ENCODE measurements at regions of chr1 and their contacts with region 1.

Region 1: DNA sequence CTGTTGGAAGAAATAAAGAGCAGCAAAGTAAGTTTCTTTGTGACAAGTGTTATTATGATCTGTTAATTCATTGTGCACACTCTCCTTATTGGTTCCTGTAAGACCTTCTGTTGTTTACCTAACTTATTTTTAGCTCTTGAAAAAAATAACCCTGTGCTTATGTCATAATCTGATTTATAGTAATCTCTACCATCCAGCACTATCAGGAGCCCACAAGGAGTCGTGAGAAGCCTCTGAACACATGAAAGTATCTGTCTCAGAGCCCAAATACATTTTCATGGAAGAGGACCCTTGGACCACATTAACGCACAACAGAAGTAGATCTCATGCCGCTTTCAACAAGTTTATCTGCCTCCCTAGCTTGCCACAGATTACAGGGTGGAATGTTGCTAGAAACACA is 45.8 kb downstream of the CENPF start:
- DNase-seq: no peak
- H3K4me3 ChIP-seq: no peak overlapping the region
- H3K27me3 ChIP-seq: no peaks in the 10 kb centered on the region
- CTCF ChIP-seq: no peak

Region 2: DNA sequence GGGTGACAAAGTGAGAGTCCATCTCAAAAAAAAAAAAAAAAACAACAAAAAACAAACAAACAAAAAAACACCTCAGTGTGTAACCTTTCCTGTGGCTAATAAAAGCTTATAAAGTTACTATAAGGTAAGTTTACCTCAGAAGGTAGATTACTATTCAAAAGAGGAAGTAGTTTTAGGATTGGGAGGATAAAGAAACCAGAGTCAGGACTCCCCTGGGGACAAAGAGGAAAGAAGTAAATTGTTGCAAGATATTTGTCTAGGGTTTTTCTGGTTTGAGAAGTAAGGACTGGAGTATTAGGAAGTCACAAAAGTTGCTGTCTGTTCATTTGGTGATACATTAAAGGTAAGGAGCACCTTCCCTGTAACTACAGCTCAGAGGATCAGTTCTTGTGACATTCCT is 69.6 kb before region 1 on chr1:
- CTCF ChIA-PET with region 1: no interaction called
- POLR2A ChIA-PET with region 1: no interaction called
- DNase-seq: no peak
- H3K4me3 ChIP-seq: no peak overlapping the region
- H3K27me3 ChIP-seq: no peaks in the 10 kb centered on the region
- CTCF ChIP-seq: no peak

Region 3: DNA sequence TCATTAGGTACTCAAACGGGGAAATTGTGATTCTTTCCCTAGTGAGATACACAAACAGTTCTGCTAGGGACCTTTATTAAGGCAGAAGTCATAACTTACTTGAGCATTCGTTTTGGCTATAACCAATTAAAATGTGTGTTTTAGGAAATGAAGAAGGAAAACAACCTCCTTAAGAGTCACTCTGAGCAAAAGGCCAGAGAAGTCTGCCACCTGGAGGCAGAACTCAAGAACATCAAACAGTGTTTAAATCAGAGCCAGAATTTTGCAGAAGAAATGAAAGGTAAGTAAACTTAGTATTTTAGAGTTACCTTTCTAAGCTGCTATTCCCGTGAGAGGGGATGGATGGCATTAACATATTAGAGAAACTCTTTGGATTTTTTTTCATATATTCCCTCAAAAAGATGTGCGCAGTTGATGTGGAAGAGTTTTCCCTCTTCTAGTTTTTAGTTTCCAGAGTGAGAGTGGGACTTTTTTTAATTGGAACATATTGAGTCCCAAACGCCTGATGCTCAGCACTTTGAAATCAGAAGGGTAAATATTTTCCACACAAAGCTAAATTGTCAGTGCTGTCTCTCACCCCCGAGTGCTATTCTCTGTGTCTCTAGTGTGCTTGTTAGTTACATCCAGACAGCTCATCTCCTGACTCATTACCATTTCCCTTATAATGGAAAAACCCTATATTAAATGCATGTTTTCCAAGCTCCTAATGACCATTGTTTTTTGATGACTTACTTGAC is 10.9 kb before region 1 on chr1:
- CTCF ChIA-PET with region 1: interaction called, 44 read pairs
- POLR2A ChIA-PET with region 1: no interaction called
- DNase-seq: no peak
- H3K4me3 ChIP-seq: no peak overlapping the region
- H3K27me3 ChIP-seq: no peaks in the 10 kb centered on the region
- CTCF ChIP-seq: peak; percentile 83

Measured in BJ (cell line).